Common myeloid progenitor, CD34-positive (primary cell): ENCODE measurements at regions of chr20 and their contacts with region 1.

Region 1: DNA sequence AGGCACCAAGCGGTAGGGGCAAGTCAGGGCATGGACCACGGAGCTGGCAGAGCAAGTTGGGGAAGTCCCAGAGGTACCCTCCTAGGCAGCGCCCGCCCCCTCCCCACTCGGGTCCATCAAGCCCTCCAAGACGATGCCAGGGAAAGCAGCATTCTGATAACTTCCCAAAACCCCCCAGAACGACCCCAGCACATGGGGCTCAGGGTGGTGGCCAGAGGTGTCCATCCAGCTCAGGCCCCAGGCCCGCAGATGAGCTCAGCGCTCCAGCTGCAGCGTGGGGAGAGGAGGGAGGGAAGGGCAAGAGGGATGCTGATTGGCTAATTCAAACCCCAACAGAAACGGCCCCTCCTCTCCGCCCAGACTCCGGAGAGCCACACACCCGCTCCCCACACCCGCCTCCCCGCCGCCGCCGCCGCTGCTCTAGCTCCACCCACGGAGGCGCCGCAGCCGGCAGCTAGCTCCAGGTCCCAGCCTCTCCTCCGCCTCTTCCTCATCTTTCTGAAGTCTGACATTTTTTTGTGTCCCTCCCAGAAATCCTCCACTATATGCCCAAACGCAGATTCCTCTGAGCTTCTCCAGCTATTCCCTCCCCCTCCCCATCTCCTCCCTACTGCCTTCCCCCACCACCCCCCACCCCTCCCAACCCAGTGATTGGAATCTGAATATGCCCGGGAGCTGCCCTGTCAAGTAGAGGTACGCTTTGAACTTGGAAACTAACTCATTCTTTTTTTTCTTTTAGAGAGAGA is 40.3 kb upstream of the TLDC2 start:
- DNase-seq: peak; percentile 89 to 96 (median 95)
- H3K4me3 ChIP-seq: peak overlapping the region; percentile 19 to 78 (median 47)
- H3K27ac ChIP-seq: peak overlapping the region in 1 of 2 experiments; percentile 34
- H3K4me1 ChIP-seq: peaks cover 0 to 19% (median 16%) of the 10 kb centered on the region in 4 experiments
- H3K27me3 ChIP-seq: no peaks in the 10 kb centered on the region

Region 2: DNA sequence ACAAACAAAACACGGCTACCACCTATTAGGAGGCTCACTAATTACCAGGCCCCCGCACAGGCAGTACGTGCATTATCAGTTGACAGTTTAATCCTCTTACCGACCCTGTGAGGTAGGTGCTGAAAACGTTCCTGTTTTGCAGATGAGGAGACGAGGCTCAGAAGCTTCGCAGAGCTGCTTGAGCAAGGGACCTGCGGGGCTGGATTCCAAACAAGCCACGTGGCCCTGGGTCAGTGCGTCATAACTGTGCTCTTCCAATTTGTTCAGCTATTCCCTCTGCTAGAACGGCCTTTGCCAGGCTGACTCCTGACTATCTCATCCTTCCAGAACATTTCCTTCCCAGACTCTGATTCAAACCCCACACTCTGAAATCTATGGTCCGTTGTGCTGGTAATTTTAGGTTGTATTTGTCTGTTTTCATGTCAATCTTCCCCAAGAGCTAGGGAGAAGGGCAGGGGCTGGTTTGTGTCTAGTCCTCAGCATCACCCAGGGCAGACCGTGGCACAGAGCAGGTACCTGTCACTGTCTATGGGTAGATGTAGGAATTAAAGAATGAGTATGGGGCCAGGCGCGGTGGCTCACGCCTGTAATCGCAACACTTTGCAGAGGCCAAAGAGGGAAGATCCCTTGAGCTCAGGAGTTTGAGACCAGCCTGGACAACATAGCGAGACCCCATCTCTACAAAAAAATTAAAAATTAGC is 11.5 kb after region 1 on chr20:
- CTCF ChIA-PET with region 1: interaction called, 19 read pairs
- POLR2A ChIA-PET with region 1: no interaction called
- DNase-seq: no peak
- H3K4me3 ChIP-seq: no peak overlapping the region
- H3K27ac ChIP-seq: no peak overlapping the region
- H3K4me1 ChIP-seq: peaks cover 3 to 28% (median 12%) of the 10 kb centered on the region in 4 experiments
- H3K27me3 ChIP-seq: no peaks in the 10 kb centered on the region

Region 3: DNA sequence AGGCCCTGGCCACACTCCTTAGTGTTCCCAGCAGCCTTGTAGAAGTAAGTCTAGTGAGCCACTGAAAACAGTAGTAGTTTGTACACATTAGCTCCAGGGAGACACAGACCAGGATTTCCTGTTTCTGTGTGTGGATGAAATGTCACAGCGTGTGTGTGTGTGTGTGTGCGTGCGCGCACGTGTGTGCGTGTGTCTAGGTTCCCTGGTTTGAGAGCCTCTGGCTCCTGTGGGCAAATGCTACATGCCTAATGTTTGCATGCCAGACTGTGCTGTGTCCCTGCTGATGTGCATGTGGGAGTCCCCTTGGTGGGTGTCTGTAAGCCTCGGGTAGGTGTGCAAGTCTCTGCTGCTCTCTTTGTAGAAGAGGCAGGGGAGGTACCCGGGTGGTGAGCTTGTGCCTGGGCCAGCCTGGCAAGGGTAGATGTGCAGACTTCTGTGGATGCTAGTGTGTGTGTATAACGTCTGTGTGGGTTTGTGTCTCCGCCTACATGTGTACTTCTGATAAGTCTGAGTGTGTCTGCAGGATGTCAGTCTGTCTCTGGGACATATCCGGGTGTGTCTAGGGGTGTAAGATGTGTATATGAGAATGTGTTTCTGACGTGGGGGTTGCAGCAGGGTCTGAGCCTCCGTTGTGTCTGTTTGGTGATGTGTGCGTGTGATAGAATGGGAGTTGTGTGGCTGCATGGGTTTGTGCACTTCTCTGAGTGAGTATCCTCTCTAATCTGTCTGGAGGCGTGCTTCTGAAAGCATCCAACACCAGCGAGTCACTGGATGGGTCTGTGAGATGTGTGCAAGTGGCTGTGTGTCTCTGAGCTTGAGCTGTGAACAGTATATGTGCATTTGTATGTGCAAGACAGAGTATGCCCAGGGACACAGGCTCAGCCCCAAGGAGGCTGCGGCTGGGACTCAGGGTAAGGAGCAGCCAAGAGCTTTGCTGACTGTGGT is 21.3 kb after region 1 on chr20:
- CTCF ChIA-PET with region 1: interaction called, 29 read pairs
- POLR2A ChIA-PET with region 1: no interaction called
- DNase-seq: peak; percentile 88 to 95 (median 94)
- H3K4me3 ChIP-seq: peak overlapping the region in 1 of 7 experiments; percentile 12
- H3K27ac ChIP-seq: peak overlapping the region in 1 of 2 experiments; percentile 71
- H3K4me1 ChIP-seq: peaks cover 0 to 30% (median 27%) of the 10 kb centered on the region in 4 experiments
- H3K27me3 ChIP-seq: no peaks in the 10 kb centered on the region

Region 4: GRCh38 chr20:36861875-36862801 is 26.5 kb after region 1 on chr20:
- CTCF ChIA-PET with region 1: interaction called, 29 read pairs
- POLR2A ChIA-PET with region 1: interaction called, 9 read pairs
- DNase-seq: no peak
- H3K4me3 ChIP-seq: peak overlapping the region; percentile 51 to 79 (median 70)
- H3K27ac ChIP-seq: no peak overlapping the region
- H3K4me1 ChIP-seq: peaks cover 0 to 31% (median 26%) of the 10 kb centered on the region in 4 experiments
- H3K27me3 ChIP-seq: peaks cover 0 to 5% (median 0%) of the 10 kb centered on the region in 5 experiments